SK-N-SH (cell line): ENCODE measurements at regions of chr3 and their contacts with region 1.

Region 1: DNA sequence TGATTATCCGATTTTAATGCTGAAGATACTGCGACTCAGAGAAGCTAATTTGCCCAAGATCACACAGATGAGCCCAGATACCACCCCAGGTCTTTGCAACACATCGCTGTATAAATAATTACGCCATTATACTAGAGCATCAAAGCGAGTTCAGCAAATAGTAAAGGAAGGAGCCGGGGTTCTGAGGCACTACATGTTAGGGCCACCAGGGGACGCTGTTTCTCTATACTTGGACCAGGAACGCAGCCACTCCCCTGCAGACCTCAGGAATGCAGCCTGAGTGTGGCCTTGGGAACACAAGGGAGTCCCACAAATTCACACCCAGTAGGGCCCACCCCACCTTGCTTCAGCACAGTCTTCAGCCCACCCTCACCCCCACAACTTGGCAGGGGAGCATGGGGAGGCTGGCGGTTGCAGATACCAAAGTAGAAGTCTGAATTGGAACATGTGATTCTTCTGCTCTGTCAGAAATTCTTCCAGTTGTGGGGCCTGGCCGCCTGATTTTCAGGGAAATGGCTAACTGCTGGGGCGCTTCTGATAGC is 57.8 kb upstream of the RYK start:
- DNase-seq: peak; percentile 85
- H3K4me3 ChIP-seq: peak overlapping the region; percentile 3 to 16; a peak in 2 of 4 replicates
- H3K27ac ChIP-seq: peak overlapping the region; percentile 4 to 67; a peak in 3 of 4 replicates
- H3K4me1 ChIP-seq: peaks cover 0 to 24% of the 10 kb centered on the region in 2 experiments; a peak in 2 of 4 replicates
- H3K27me3 ChIP-seq: no peaks in the 10 kb centered on the region
- CTCF ChIP-seq: peak; percentile 99
- EP300 ChIP-seq: no peak
- RAD21 ChIP-seq: peak; percentile 100

Region 2: DNA sequence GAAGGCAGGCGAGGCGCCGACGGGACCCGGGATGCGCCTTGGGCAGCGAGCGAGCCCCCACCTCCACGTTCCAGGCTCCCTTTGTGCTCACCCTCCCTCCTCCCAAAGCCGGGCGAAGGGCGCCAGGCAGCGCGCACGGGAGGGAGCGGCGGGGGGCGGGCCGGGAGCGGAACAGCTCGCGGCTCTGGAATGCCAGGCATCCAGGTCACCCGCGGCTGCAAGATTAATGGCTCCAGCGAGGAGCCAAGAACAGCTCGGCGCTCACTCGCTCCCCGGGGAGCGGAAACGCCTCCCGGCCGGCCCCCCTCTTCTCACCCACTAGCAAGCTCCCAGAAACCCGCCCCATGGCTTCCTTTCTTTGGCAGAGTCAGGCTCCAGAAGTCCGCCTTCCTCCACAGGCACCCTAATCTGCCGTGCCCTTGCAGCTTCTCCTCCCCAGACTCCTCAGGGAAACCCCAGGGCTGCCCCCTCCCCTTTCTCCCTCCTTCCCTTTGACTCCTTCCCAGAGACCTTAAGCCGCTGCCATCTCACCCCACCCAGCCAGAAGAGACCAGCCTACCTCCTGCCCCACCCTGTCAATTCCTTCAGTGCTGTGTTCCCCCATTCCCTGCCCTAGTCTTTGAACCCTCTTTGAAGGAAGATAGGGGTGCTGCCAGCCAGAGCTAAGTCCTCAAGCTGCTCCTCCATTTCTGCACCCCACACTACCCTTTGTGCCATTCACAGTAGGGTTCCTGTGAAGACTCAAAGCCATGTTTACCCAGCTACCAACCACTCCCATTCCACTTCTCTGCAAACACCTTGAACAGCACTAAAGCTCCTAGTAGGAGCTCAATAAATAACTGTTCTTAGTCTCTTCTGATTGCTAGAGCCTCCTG is 55.9 kb after region 1 on chr3:
- CTCF ChIA-PET with region 1: interaction called, 13 read pairs
- POLR2A ChIA-PET with region 1: no interaction called
- DNase-seq: peak; percentile 92
- H3K4me3 ChIP-seq: peak overlapping the region; percentile 26 to 28; a peak in 2 of 4 replicates
- H3K27ac ChIP-seq: peak overlapping the region; percentile 56 to 99
- H3K4me1 ChIP-seq: peaks cover 15 to 93% of the 10 kb centered on the region in 2 experiments; a peak in 3 of 4 replicates
- H3K27me3 ChIP-seq: no peaks in the 10 kb centered on the region
- CTCF ChIP-seq: no peak
- EP300 ChIP-seq: peak; percentile 68 to 93
- RAD21 ChIP-seq: no peak

Region 3: DNA sequence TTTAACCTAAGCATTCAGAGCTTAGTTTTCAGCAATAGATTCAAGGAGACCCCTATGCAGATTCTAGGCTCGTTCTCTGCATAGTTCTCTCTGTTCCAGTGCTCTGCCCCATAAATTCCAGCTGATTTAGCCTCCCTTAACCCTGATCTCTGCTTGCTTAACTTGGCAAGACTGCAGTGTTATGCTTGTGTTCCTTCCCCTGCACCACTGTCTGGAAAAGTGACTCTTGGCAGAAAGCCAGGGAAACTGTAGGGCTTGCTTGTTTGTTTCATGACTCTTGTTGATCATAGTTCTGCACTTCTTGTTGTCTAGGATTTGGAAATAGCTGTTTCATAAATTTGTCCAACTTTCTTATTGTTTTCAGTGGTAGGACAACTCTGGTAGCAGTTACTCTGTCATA is 137.2 kb after region 1 on chr3:
- CTCF ChIA-PET with region 1: interaction called, 10 read pairs
- POLR2A ChIA-PET with region 1: no interaction called
- DNase-seq: no peak
- H3K4me3 ChIP-seq: no peak overlapping the region
- H3K27ac ChIP-seq: no peak overlapping the region
- H3K4me1 ChIP-seq: no peaks in the 10 kb centered on the region
- H3K27me3 ChIP-seq: no peaks in the 10 kb centered on the region
- CTCF ChIP-seq: no peak
- EP300 ChIP-seq: no peak
- RAD21 ChIP-seq: no peak

Region 4: DNA sequence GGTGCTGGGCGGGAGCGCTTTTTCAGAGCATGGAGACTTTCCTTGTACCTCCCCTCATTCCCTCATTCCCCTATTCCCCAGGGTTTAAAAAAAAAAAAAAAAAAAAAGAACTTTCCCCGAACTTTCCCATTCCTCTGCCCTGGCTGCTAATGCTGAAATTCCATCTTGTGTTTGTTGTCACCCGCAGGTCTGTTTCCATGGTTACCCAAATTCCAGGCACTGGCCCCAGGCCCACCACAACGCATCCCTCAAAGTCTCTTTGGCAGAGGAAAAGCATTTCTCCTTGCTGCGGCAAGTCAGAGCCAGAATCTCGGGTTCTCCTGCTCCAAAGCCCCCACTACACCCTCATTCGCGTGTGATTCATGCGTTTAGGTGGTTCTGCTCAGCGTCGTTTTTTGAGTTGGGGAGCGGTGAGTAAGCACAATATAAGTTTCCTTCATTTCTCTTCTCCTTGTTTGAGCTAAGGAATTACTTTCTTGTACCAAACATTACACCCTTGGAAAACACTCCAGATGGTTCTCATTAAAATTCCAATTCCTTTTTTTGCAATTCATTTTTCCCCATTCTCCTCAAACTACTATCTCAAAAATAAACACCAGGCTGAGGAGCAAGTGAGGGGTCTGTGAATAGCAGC is 155.8 kb after region 1 on chr3:
- CTCF ChIA-PET with region 1: interaction called, 11 read pairs
- POLR2A ChIA-PET with region 1: no interaction called
- DNase-seq: peak; percentile 23
- H3K4me3 ChIP-seq: peak overlapping the region in 1 of 2 experiments; percentile 20; a peak in 1 of 4 replicates
- H3K27ac ChIP-seq: peak overlapping the region; percentile 77 to 100
- H3K4me1 ChIP-seq: peaks cover 6 to 32% of the 10 kb centered on the region in 2 experiments; a peak in 3 of 4 replicates
- H3K27me3 ChIP-seq: no peaks in the 10 kb centered on the region
- CTCF ChIP-seq: no peak
- EP300 ChIP-seq: peak in 1 of 2 experiments; percentile 80; a peak in 2 of 4 replicates
- RAD21 ChIP-seq: no peak

Region 5: GRCh38 chr3:134485718-134486576 is 177.5 kb after region 1 on chr3 and contains the starts of genes ANAPC13 and CEP63:
- CTCF ChIA-PET with region 1: interaction called, 375 read pairs
- POLR2A ChIA-PET with region 1: no interaction called
- DNase-seq: peak; percentile 92
- H3K4me3 ChIP-seq: peak within 1 kb of the TSS; percentile 85 to 96
- H3K27ac ChIP-seq: peak within 1 kb of the TSS; percentile 95 to 98
- H3K4me1 ChIP-seq: peaks cover 12 to 33% of the 10 kb centered on the region in 2 experiments
- H3K27me3 ChIP-seq: no peaks in the 10 kb centered on the region
- CTCF ChIP-seq: no peak
- EP300 ChIP-seq: peak; percentile 5 to 50; a peak in 1 of 4 replicates
- RAD21 ChIP-seq: no peak
- polyA plus RNA-seq, gene ANAPC13: 63.5 and 76.4 TPM in 2 replicates
- polyA plus RNA-seq, gene CEP63: 6.0 and 6.3 TPM in 2 replicates

Region 6: DNA sequence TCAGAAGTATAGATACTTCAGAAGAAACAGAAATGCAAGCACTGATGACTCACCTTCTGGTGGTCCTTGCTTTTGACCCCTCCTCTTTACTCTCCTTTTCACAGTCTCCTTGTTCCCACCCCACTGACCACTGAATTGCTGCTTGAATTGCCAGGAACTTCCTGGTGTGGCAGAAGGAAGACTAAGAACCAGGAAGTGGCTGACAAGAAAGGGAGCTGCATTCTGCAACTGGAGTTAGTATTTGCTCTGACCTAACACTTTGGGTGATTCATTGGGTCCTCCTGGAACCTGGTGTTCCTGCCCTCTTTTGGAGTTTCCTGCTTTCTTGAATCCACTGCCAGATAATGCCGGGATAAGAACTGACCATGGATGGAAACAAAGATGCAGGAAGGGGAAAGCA is 319.4 kb after region 1 on chr3:
- CTCF ChIA-PET with region 1: no interaction called
- POLR2A ChIA-PET with region 1: no interaction called
- DNase-seq: no peak
- H3K4me3 ChIP-seq: no peak overlapping the region
- H3K27ac ChIP-seq: no peak overlapping the region
- H3K4me1 ChIP-seq: no peaks in the 10 kb centered on the region
- H3K27me3 ChIP-seq: no peaks in the 10 kb centered on the region
- CTCF ChIP-seq: no peak
- EP300 ChIP-seq: no peak
- RAD21 ChIP-seq: no peak